ENCODE measurements at regions of chr10 and their contacts with region 1.

Region 1: GRCh38 chr10:83871187-83872081 is 267.9 kb upstream of the GHITM start:
- DNase-seq: peak; percentile 83
- H3K4me3 Mint-ChIP-seq: no peak overlapping the region
- H3K27ac Mint-ChIP-seq: no peak overlapping the region
- H3K4me1 Mint-ChIP-seq: no peaks in the 10 kb centered on the region
- H3K27me3 Mint-ChIP-seq: no peaks in the 10 kb centered on the region
- CTCF ChIP-seq: peak; percentile 94

Region 2: GRCh38 chr10:82796510-82796909 is 1074.9 kb before region 1 on chr10:
- CTCF ChIA-PET with region 1: interaction called, 66 read pairs
- POLR2A ChIA-PET with region 1: interaction called, 6 read pairs
- intact Hi-C with region 1: loop called (anchors 1 kb)
- DNase-seq: peak; percentile 23
- H3K4me3 Mint-ChIP-seq: no peak overlapping the region
- H3K27ac Mint-ChIP-seq: no peak overlapping the region
- H3K4me1 Mint-ChIP-seq: no peaks in the 10 kb centered on the region
- H3K27me3 Mint-ChIP-seq: no peaks in the 10 kb centered on the region
- CTCF ChIP-seq: peak; percentile 76

Region 3: GRCh38 chr10:82982110-82982608 is 889.3 kb before region 1 on chr10:
- CTCF ChIA-PET with region 1: interaction called, 4 read pairs
- POLR2A ChIA-PET with region 1: no interaction called
- intact Hi-C with region 1: loop called (anchors 5 kb)
- DNase-seq: peak; percentile 84
- H3K4me3 Mint-ChIP-seq: no peak overlapping the region
- H3K27ac Mint-ChIP-seq: peak overlapping the region; percentile 57
- H3K4me1 Mint-ChIP-seq: peaks cover 16% of the 10 kb centered on the region
- H3K27me3 Mint-ChIP-seq: no peaks in the 10 kb centered on the region
- CTCF ChIP-seq: no peak

Region 4: GRCh38 chr10:83539528-83540308 is 331.7 kb before region 1 on chr10:
- CTCF ChIA-PET with region 1: no interaction called
- POLR2A ChIA-PET with region 1: no interaction called
- intact Hi-C with region 1: loop called (anchors 10 kb)
- DNase-seq: peak; percentile 6
- H3K4me3 Mint-ChIP-seq: no peak overlapping the region
- H3K27ac Mint-ChIP-seq: no peak overlapping the region
- H3K4me1 Mint-ChIP-seq: peaks cover 9% of the 10 kb centered on the region
- H3K27me3 Mint-ChIP-seq: no peaks in the 10 kb centered on the region
- CTCF ChIP-seq: no peak

Region 5: GRCh38 chr10:83617692-83618545 is 253.5 kb before region 1 on chr10:
- CTCF ChIA-PET with region 1: no interaction called
- POLR2A ChIA-PET with region 1: no interaction called
- intact Hi-C with region 1: no loop called
- DNase-seq: no peak
- H3K4me3 Mint-ChIP-seq: no peak overlapping the region
- H3K27ac Mint-ChIP-seq: no peak overlapping the region
- H3K4me1 Mint-ChIP-seq: no peaks in the 10 kb centered on the region
- H3K27me3 Mint-ChIP-seq: no peaks in the 10 kb centered on the region
- CTCF ChIP-seq: no peak

Region 6: DNA sequence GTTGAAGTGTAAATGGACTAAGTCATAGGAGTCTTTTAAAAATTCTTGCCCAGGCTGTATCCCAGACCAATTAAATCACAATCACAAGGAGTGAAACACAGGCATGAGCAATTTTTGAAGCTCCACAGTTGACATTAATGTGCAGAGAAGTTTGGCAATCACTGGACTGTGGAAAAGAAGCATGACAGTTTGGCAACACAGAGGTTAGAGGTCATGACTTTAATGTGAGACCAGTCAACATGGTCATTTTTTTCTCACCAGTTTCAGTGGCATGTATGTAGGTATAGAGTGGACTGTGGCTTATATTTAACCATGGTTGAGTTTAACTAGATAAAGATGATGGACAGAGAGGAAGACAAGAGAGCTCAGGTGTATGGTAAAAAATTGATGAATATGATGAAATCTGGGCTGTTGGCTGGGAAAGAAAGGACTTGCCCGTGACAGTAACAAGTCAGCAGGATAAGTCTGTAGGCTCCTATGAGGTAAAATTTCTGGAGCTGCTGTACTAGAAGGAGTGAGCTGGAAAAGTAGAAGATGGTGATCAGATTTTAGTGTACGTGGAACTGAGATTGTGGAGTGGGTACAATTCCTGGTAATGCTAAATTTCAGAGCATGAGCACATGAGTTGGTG is 164.4 kb before region 1 on chr10:
- CTCF ChIA-PET with region 1: no interaction called
- POLR2A ChIA-PET with region 1: no interaction called
- intact Hi-C with region 1: no loop called
- DNase-seq: no peak
- H3K4me3 Mint-ChIP-seq: no peak overlapping the region
- H3K27ac Mint-ChIP-seq: no peak overlapping the region
- H3K4me1 Mint-ChIP-seq: peaks cover 5% of the 10 kb centered on the region
- H3K27me3 Mint-ChIP-seq: no peaks in the 10 kb centered on the region
- CTCF ChIP-seq: no peak

Region 7: DNA sequence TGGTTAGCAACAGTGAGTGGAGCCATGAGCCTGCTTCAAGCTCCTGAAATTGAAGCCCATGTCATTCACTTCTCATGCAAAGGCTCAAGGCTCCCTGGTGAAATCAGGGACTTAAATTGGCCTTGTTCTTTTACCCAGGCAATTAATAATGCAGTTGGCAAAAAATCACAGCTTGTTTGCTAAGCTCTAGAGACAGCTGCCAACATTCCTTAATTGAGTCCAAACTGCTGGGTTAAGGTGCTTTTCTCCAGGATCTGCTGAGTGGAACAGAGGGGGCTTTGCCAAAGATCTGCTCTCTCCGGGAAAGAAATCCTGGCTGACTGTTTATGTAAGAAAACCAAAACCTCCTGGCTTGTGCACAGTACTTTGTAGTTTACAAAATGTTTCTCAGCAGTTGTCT is 10.2 kb after region 1 on chr10:
- CTCF ChIA-PET with region 1: interaction called, 15 read pairs
- POLR2A ChIA-PET with region 1: interaction called, 3 read pairs
- intact Hi-C with region 1: no loop called
- DNase-seq: no peak
- H3K4me3 Mint-ChIP-seq: no peak overlapping the region
- H3K27ac Mint-ChIP-seq: no peak overlapping the region
- H3K4me1 Mint-ChIP-seq: no peaks in the 10 kb centered on the region
- H3K27me3 Mint-ChIP-seq: no peaks in the 10 kb centered on the region
- CTCF ChIP-seq: no peak

Region 8: GRCh38 chr10:83929399-83929798 is 58.0 kb after region 1 on chr10:
- CTCF ChIA-PET with region 1: no interaction called
- POLR2A ChIA-PET with region 1: no interaction called
- intact Hi-C with region 1: no loop called
- DNase-seq: no peak
- H3K4me3 Mint-ChIP-seq: no peak overlapping the region
- H3K27ac Mint-ChIP-seq: no peak overlapping the region
- H3K4me1 Mint-ChIP-seq: no peaks in the 10 kb centered on the region
- H3K27me3 Mint-ChIP-seq: peaks cover 11% of the 10 kb centered on the region
- CTCF ChIP-seq: no peak

Measured in MCF 10A (cell line).